Activated CD4-positive, alpha-beta T cell treated with anti-CD3 and anti-CD28 coated beads, Interleukin-2, amount 10 ng/mL, durations not matched to agents 7 days and 5 days (primary cell): ENCODE measurements at regions of chr22 and their contacts with region 1.

Region 1: GRCh38 chr22:30649430-30650007 is 13.9 kb downstream of the SLC35E4 start:
- DNase-seq: peak; percentile 69
- H3K4me3 Mint-ChIP-seq: no peak overlapping the region
- H3K27ac Mint-ChIP-seq: peak overlapping the region; percentile 83
- H3K4me1 Mint-ChIP-seq: peaks cover 33% of the 10 kb centered on the region
- H3K27me3 Mint-ChIP-seq: no peaks in the 10 kb centered on the region

Region 2: DNA sequence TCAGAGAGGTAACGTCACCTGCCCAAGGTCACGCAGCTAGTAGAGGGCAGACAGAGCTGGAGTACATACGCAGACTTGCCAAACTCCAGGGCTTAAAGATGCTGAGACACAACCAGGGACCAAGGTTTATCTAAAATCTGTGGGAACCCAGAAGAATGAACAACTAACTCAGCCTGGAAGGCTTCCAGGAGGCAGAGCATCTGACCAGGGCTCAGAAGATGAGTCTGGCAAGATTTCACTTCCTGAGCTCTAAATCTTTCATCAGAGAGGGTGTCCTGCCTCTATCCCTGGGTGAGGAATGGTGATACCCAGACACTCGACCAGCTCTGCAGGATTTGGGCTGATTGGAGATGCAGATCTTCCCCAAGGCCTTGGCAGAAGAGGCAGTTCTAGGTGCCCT is 84.2 kb before region 1 on chr22:
- CTCF ChIA-PET with region 1: no interaction called
- POLR2A ChIA-PET with region 1: no interaction called
- DNase-seq: no peak
- H3K4me3 Mint-ChIP-seq: no peak overlapping the region
- H3K27ac Mint-ChIP-seq: no peak overlapping the region
- H3K4me1 Mint-ChIP-seq: no peaks in the 10 kb centered on the region
- H3K27me3 Mint-ChIP-seq: peaks cover 3% of the 10 kb centered on the region

Region 3: GRCh38 chr22:30662040-30662439 is 12.5 kb after region 1 on chr22:
- CTCF ChIA-PET with region 1: interaction called, 14 read pairs
- POLR2A ChIA-PET with region 1: no interaction called
- DNase-seq: no peak
- H3K4me3 Mint-ChIP-seq: no peak overlapping the region
- H3K27ac Mint-ChIP-seq: no peak overlapping the region
- H3K4me1 Mint-ChIP-seq: peaks cover 16% of the 10 kb centered on the region
- H3K27me3 Mint-ChIP-seq: no peaks in the 10 kb centered on the region